HepG2 (cell line): ENCODE measurements at regions of chr1 and their contacts with region 1.

Region 1: DNA sequence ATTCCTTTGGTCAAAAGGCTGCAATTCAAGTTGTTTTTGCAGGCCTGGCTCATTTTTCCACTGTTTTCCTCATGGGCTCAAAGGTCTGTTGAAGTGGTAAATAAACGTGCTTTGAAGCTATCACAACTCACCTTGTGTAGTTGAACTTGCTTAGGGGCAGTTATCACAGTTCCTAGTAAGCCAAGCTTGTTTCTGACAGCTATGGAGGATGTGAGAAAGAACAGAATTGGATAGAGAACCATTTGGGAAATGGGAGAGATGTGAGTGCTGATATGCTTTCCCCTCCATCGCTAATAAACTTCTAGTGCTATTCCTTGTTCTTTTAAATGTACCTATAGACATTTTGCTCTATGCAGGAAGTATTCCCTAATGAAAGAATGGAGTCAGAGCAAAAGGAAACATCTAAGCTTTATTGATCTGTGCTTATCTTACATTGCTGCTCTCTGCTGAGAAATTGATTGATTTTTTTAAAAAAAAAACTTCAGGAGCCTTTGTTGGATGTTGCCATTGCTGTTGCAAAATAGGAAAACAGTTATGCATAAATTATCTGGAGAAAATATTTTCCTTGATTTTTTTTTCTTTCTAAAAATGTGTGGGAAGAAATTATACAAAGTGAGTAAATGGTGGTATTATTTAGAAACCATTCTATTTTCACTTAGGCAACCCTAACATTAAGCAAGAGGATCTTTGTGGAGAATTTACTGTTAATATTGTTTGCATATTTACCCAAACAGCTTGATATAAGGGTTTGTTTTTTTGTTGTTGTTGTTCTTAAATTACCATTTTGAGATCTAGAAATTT is 118.2 kb downstream of the MAGI3 start:
- DNase-seq: peak; percentile 94
- ATAC-seq: peak; percentile 99
- H3K4me3 ChIP-seq: peak overlapping the region in 2 of 3 experiments; percentile 42 to 51; a peak in 3 of 6 replicates
- H3K27ac ChIP-seq: peak overlapping the region; percentile 81
- H3K4me1 ChIP-seq: peaks cover 36% of the 10 kb centered on the region
- H3K27me3 ChIP-seq: no peaks in the 10 kb centered on the region
- CTCF ChIP-seq: no peak
- EP300 ChIP-seq: peak in 1 of 2 experiments; percentile 83; a peak in 2 of 4 replicates
- POLR2A ChIP-seq: no peak
- RAD21 ChIP-seq: no peak

Region 2: GRCh38 chr1:113519556-113519955 is 11.0 kb after region 1 on chr1:
- CTCF ChIA-PET with region 1: no interaction called
- POLR2A ChIA-PET with region 1: interaction called, 16 read pairs
- in situ Hi-C with region 1: no loop called
- intact Hi-C with region 1: no loop called
- DNase-seq: peak; percentile 30
- ATAC-seq: no peak
- H3K4me3 ChIP-seq: no peak overlapping the region
- H3K27ac ChIP-seq: no peak overlapping the region
- H3K4me1 ChIP-seq: peaks cover 51% of the 10 kb centered on the region
- H3K27me3 ChIP-seq: no peaks in the 10 kb centered on the region; a peak in 1 of 5 replicates
- CTCF ChIP-seq: no peak
- EP300 ChIP-seq: no peak
- POLR2A ChIP-seq: no peak
- RAD21 ChIP-seq: no peak

Region 3: GRCh38 chr1:113616156-113616555 is 107.6 kb after region 1 on chr1:
- CTCF ChIA-PET with region 1: no interaction called
- POLR2A ChIA-PET with region 1: no interaction called
- in situ Hi-C with region 1: no loop called
- intact Hi-C with region 1: no loop called
- DNase-seq: no peak
- ATAC-seq: no peak
- H3K4me3 ChIP-seq: no peak overlapping the region
- H3K27ac ChIP-seq: no peak overlapping the region
- H3K4me1 ChIP-seq: no peaks in the 10 kb centered on the region
- H3K27me3 ChIP-seq: no peaks in the 10 kb centered on the region
- CTCF ChIP-seq: no peak
- EP300 ChIP-seq: no peak
- POLR2A ChIP-seq: no peak
- RAD21 ChIP-seq: no peak